Endothelial cell of umbilical vein (primary cell): ENCODE measurements at regions of chr20 and their contacts with region 1.

Region 1: GRCh38 chr20:62793912-62794724 is 2.2 kb upstream of the MRGBP start:
- DNase-seq: peak; percentile 96
- H3K4me3 ChIP-seq: peak overlapping the region; percentile 4 to 60 (median 43)
- H3K27ac ChIP-seq: peak overlapping the region; percentile 72
- H3K4me1 ChIP-seq: peaks cover 22% of the 10 kb centered on the region
- H3K27me3 ChIP-seq: no peaks in the 10 kb centered on the region
- CTCF ChIP-seq: no peak
- POLR2A ChIP-seq: peak; percentile 89

Region 2: GRCh38 chr20:62302341-62303058 is 491.6 kb before region 1 on chr20 and contains the start of gene ADRM1:
- CTCF ChIA-PET with region 1: no interaction called
- POLR2A ChIA-PET with region 1: no interaction called
- dilution Hi-C with region 1: no loop called
- intact Hi-C with region 1: loop called (anchors 10 kb)
- DNase-seq: peak; percentile 98
- H3K4me3 ChIP-seq: peak within 1 kb of the TSS; percentile 32 to 95 (median 50)
- H3K27ac ChIP-seq: peak within 1 kb of the TSS; percentile 84
- H3K4me1 ChIP-seq: peaks cover 21% of the 10 kb centered on the region
- H3K27me3 ChIP-seq: no peaks in the 10 kb centered on the region
- CTCF ChIP-seq: peak; percentile 92 to 95
- POLR2A ChIP-seq: peak; percentile 59
- total RNA-seq, gene ADRM1: 144 and 154 TPM in 2 replicates

Region 3: GRCh38 chr20:62500237-62500864 is 293.8 kb before region 1 on chr20:
- CTCF ChIA-PET with region 1: interaction called, 23 read pairs
- POLR2A ChIA-PET with region 1: no interaction called
- dilution Hi-C with region 1: no loop called
- intact Hi-C with region 1: loop called (anchors 1 kb)
- DNase-seq: peak; percentile 42
- H3K4me3 ChIP-seq: no peak overlapping the region
- H3K27ac ChIP-seq: no peak overlapping the region
- H3K4me1 ChIP-seq: no peaks in the 10 kb centered on the region
- H3K27me3 ChIP-seq: no peaks in the 10 kb centered on the region
- CTCF ChIP-seq: peak; percentile 77 to 96
- POLR2A ChIP-seq: no peak

Region 4: GRCh38 chr20:62540330-62540903 is 253.7 kb before region 1 on chr20:
- CTCF ChIA-PET with region 1: no interaction called
- POLR2A ChIA-PET with region 1: no interaction called
- dilution Hi-C with region 1: no loop called
- intact Hi-C with region 1: no loop called
- DNase-seq: no peak
- H3K4me3 ChIP-seq: no peak overlapping the region
- H3K27ac ChIP-seq: no peak overlapping the region
- H3K4me1 ChIP-seq: no peaks in the 10 kb centered on the region
- H3K27me3 ChIP-seq: no peaks in the 10 kb centered on the region
- CTCF ChIP-seq: no peak
- POLR2A ChIP-seq: no peak

Region 5: DNA sequence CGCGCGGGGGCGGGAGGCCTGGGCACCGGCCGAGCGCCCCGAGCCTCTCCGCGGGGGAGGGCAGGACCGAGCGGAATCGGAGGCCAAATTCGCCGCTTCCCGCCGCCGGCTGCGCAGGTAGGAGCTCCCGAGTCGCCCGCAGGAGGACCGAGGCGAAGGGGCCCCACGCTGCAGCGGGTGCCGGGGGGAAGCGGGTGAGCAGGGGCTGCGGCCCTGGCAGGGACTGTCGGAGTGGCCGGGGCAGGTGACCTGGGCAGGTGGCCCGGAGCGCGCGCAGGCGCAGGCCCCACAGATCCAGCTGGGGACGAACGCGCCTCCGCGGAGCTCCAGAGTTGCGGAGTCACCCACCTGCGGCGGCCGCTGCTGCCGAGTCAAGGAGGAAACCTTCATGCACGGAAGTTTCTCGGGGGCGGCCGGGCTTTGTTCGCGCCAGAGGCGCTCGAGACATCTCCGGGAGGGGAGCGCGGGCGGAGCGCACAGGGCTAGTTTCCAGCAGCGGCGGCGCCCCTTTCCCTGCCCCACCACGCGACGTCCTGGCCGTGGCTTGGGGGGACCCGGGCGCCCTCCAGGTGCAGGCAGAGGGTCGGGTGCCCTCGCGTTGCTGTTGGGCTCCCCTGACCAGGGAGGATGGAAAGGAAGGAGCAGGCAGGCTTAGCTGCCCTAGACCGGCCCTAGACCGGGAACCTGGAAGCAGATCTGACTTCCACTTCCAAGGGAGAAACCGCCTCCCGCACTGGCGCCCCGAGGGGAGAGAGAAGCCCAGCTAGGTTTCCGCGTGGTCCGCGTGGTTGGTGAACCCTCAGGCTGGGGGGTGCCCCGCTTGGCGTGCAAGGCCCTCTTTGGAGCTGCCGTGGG is 151.2 kb before region 1 on chr20:
- CTCF ChIA-PET with region 1: interaction called, 10 read pairs
- POLR2A ChIA-PET with region 1: no interaction called
- dilution Hi-C with region 1: no loop called
- intact Hi-C with region 1: no loop called
- DNase-seq: peak; percentile 27
- H3K4me3 ChIP-seq: peak overlapping the region; percentile 40 to 61 (median 45)
- H3K27ac ChIP-seq: no peak overlapping the region
- H3K4me1 ChIP-seq: peaks cover 4% of the 10 kb centered on the region
- H3K27me3 ChIP-seq: peaks cover 0 to 1% of the 10 kb centered on the region in 2 experiments
- CTCF ChIP-seq: no peak
- POLR2A ChIP-seq: no peak

Region 6: GRCh38 chr20:62685781-62686555 is 108.2 kb before region 1 on chr20:
- CTCF ChIA-PET with region 1: interaction called, 63 read pairs
- POLR2A ChIA-PET with region 1: no interaction called
- dilution Hi-C with region 1: no loop called
- intact Hi-C with region 1: loop called (anchors 1 kb)
- DNase-seq: no peak
- H3K4me3 ChIP-seq: no peak overlapping the region
- H3K27ac ChIP-seq: no peak overlapping the region
- H3K4me1 ChIP-seq: no peaks in the 10 kb centered on the region
- H3K27me3 ChIP-seq: peaks cover 0 to 2% of the 10 kb centered on the region in 2 experiments
- CTCF ChIP-seq: no peak
- POLR2A ChIP-seq: no peak

Region 7: GRCh38 chr20:62740286-62741141 is 53.6 kb before region 1 on chr20:
- CTCF ChIA-PET with region 1: interaction called, 24 read pairs
- POLR2A ChIA-PET with region 1: no interaction called
- dilution Hi-C with region 1: no loop called
- intact Hi-C with region 1: loop called (anchors 2 kb)
- DNase-seq: peak; percentile 85
- H3K4me3 ChIP-seq: no peak overlapping the region
- H3K27ac ChIP-seq: peak overlapping the region; percentile 77
- H3K4me1 ChIP-seq: peaks cover 26% of the 10 kb centered on the region
- H3K27me3 ChIP-seq: no peaks in the 10 kb centered on the region
- CTCF ChIP-seq: no peak
- POLR2A ChIP-seq: peak; percentile 30

Region 8: DNA sequence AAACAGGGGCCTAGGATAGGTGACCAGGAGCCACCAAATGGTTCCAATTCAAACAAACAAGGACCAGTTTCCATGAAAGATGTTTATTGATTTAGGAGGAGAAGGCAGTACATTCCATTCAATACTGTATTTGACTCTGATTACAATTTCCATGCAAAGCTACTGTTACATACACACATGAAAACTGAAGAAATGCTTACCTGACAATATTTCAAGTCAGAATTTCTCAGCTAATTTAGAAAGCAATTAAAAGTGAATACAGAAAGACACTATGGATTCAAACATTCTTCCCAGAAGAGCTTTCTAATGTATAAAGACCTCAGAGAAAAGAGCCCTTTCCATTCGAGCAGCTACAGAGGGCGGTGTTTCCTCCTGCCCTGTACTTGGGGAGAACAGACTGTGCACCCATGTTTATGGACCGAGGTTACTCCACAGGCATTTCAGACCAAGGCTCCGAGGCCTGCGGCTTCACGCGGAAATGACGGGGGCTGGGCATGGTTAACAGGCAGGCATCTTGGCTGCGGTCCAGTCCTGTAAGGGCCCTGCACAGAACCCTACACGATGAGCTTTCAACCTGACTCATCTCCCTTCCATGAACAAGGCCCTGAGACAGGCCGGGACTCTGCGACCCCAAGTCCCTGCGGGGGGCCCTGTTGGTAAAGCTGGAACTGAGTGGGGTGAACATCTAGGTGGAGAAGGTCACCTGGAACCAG is 93.2 kb after region 1 on chr20:
- CTCF ChIA-PET with region 1: no interaction called
- POLR2A ChIA-PET with region 1: no interaction called
- dilution Hi-C with region 1: no loop called
- intact Hi-C with region 1: no loop called
- DNase-seq: peak; percentile 23
- H3K4me3 ChIP-seq: no peak overlapping the region
- H3K27ac ChIP-seq: no peak overlapping the region
- H3K4me1 ChIP-seq: no peaks in the 10 kb centered on the region
- H3K27me3 ChIP-seq: no peaks in the 10 kb centered on the region
- CTCF ChIP-seq: no peak
- POLR2A ChIP-seq: no peak

Region 9: DNA sequence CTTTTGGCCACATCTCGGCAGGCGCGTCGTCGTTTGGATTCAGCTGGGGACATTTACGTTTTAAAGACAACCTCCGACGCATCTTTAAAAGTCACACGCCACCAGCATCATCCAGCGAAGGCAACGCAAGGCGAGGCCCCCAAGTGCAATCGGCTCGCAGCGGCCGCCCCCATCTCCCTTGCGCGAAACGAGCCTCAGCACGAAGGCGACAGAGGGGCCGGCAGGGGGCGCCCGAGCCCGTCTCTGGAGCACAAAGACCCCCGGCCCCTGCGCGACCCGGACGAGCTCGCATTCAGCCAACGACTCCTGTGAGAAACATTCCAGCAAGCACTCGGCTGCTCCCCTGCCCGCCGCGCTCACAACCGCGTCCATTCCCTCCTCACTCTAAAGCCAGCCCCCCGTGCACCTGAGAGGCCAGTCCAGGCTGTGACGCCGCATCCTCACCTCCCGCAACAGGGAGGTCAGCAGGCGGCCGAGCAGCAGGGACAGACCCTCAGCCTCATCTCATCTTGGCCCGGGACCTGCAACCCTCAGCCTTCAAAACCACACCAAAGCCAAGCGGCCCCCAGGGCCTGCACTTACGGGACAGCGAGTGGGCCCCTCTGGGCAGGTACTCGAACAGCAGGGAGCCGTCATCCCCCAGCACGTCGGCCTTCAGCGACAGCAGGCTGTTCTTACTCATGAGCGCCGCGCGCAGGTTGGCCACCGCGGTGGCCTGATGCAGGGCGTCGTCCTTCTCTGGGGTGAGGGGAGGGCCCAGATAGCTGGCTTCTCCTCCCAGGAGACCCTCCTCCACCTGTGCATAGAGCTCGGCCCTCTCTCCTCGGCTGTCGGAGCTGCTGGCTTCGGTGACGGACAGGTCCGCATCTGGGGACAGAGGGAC is 981.2 kb after region 1 on chr20:
- CTCF ChIA-PET with region 1: no interaction called
- POLR2A ChIA-PET with region 1: no interaction called
- dilution Hi-C with region 1: no loop called
- intact Hi-C with region 1: no loop called
- DNase-seq: peak; percentile 60
- H3K4me3 ChIP-seq: peak overlapping the region in 2 of 3 experiments; percentile 17 to 26
- H3K27ac ChIP-seq: no peak overlapping the region
- H3K4me1 ChIP-seq: peaks cover 6% of the 10 kb centered on the region
- H3K27me3 ChIP-seq: no peaks in the 10 kb centered on the region
- CTCF ChIP-seq: peak; percentile 86 to 94
- POLR2A ChIP-seq: no peak